ENCODE measurements at regions of chr15 and their contacts with region 1.

Region 1: GRCh38 chr15:72796515-72797337 is 13.2 kb upstream of the ADPGK start:
- DNase-seq: peak; percentile 40
- H3K4me3 ChIP-seq: peak overlapping the region; percentile 53
- H3K27ac ChIP-seq: no peak overlapping the region
- H3K4me1 ChIP-seq: peaks cover 10% of the 10 kb centered on the region
- CTCF ChIP-seq: peak; percentile 79

Region 2: DNA sequence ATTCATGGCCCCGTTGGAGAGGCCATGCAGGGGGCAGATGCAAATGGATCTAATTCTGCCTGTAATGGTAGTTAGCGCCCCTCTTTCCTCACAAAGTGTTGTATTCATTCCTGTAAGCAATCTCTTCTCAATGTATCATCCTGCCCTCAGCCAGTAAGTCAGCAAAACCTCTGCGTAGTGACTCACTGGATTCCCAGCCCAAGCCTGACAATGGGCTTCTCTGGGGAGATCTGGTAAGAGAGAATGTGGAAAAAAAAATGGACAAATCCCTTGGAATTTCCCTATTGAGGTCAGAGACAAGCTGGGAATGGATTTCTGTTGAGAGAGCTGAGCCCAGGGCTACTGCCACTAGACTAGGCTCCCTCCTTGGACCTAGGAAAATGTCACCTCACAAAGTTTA is 38.5 kb before region 1 on chr15:
- CTCF ChIA-PET with region 1: no interaction called
- POLR2A ChIA-PET with region 1: no interaction called
- intact Hi-C with region 1: loop called (anchors 2 kb)
- DNase-seq: no peak
- H3K4me3 ChIP-seq: no peak overlapping the region
- H3K27ac ChIP-seq: no peak overlapping the region
- H3K4me1 ChIP-seq: no peaks in the 10 kb centered on the region
- CTCF ChIP-seq: no peak